Ascending aorta (tissue), 2 donors: ENCODE measurements at regions of chr9 and their contacts with region 1.

Region 1: DNA sequence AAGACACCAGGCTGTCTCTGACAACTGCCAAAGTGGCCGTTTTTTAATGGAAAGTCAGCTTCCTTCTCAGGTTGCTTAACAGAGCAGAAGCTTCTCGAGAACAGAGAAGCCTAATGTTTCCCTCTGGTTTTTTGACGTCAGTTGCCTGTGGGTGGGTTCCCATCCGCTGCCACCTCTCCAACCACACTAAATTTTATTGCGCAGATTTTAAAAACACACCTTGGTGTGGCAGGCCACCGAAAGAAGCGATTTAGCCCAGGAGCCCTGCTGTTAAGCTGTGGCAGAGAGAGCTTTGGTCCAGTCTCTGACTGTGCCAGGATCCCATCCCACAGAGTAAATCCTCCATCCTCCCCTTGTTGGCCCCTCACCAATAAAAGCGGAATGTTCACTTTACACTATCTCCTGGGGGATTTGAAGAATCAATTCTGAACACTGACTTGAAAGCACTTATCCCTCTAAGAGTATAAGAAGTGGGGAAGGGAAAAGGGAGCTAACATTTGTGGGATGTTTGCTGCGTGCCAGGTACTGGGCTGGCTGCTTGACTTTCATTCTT is 181.6 kb downstream of the AOPEP start:
- DNase-seq: no peak
- H3K4me3 ChIP-seq: peak overlapping the region in 1 of 2 donors; percentile 18
- H3K27ac ChIP-seq: peak overlapping the region; percentile 88 to 90
- H3K4me1 ChIP-seq: peaks cover 11 to 37% of the 10 kb centered on the region in 2 donors
- H3K27me3 ChIP-seq: no peaks in the 10 kb centered on the region
- CTCF ChIP-seq: no peak

Region 2: GRCh38 chr9:94783102-94783664 is 124.9 kb before region 1 on chr9:
- intact Hi-C with region 1: loop called (anchors 2 kb)
- DNase-seq: peak in 1 of 2 donors; percentile 91
- H3K4me3 ChIP-seq: no peak overlapping the region
- H3K27ac ChIP-seq: peak overlapping the region; percentile 83 to 84
- H3K4me1 ChIP-seq: peaks cover 0 to 34% of the 10 kb centered on the region in 2 donors
- H3K27me3 ChIP-seq: no peaks in the 10 kb centered on the region
- CTCF ChIP-seq: peak; percentile 64 to 69 (median 68)

Region 3: DNA sequence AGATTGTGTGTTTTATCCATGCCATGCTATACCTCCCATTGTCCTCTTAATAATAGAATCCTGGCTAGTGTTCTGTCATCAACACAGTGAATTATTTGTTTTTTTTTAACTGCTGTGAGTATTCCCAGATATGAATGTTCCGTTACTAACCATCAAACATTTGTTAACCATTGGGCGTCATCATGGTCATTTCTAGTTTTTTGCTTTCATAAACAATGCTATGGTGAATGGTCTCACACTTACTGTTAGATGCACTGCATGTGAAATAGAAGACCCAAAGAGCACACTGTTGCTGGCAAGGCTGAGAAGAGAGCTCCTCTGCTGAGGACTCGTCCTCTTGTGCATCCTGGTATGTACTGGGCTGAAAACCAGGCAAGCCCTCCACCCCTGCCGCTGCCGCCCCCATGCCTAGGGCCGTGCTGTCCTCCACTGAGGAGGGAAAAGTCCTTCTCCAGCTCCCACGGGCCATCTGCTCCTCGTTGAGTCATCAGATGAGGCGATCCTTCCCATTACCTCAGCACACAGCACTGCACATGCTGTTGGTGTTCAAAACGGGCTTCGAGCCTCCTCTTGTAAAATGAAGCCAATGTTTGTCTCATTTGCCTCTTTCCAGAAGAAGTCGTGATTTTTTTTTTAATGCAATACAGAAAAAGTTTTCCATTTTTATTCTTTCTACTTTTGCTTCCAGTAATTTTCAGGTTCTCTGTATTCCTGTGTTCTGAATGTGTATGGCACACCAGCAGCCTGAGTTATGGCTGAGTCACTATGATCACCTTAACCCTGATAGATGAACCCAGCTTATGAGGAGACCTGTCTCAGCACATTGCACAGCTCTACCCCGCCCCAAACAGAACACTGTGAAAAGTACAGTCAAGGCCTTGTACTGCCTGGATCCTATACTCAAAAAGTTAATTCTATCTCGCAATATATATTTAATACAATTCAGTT is 37.4 kb after region 1 on chr9:
- intact Hi-C with region 1: loop called (anchors 2 kb)
- DNase-seq: peak in 1 of 2 donors; percentile 87
- H3K4me3 ChIP-seq: no peak overlapping the region
- H3K27ac ChIP-seq: peak overlapping the region; percentile 65 to 81
- H3K4me1 ChIP-seq: peaks cover 13 to 51% of the 10 kb centered on the region in 2 donors
- H3K27me3 ChIP-seq: no peaks in the 10 kb centered on the region
- CTCF ChIP-seq: no peak

Region 4: GRCh38 chr9:94973451-94973941 is 65.4 kb after region 1 on chr9:
- intact Hi-C with region 1: no loop called
- DNase-seq: peak in 1 of 2 donors; percentile 71
- H3K4me3 ChIP-seq: no peak overlapping the region
- H3K27ac ChIP-seq: peak overlapping the region; percentile 67 to 76
- H3K4me1 ChIP-seq: peaks cover 4 to 28% of the 10 kb centered on the region in 2 donors
- H3K27me3 ChIP-seq: no peaks in the 10 kb centered on the region
- CTCF ChIP-seq: no peak